GM13977 (cell line): ENCODE measurements at regions of chr15 and their contacts with region 1.

Region 1: DNA sequence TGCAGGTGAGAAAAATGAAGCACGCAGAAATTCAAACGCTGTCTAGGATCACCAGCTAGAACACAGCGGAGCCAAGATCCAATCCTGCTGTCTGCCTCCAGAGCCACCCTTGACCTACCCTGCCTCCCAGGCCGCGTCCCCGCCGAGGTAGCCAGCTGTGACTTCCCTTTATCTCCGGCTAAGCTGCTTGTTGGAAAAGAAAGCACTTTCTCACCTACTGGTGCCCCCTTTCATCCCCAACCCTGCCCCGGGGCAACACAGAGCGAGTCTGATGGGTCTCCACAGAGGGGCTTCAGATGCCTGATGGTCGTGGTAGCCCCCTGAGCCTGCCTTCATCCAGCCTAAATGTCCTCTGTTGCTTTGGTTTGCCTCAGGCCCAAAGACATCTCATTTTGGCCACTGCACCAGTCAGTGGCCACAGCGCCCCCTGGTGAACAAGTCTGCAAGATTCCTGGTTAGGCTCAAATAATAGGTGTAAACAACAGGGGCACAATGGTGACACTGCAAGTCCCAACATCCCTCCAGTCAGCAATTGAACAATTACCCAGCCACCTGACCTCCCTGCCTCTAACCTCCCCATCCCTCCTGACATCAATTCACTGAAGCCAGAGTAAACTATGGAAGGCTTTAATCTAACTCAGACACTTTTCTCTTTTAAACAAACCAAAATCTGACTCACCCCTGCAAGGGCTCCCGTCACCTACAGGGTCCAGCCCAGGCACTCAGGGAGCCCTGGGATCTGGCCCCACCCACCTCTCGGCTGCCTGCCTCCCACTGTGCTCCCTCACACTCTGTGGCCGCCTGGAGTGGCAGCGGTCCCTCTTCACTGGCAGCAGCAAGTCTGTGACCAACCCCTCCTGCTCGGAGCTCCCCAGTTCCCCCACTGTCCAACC is 27.3 kb upstream of the BCL2L10 start:
- DNase-seq: peak; percentile 82
- CTCF ChIP-seq: peak; percentile 89

Region 2: DNA sequence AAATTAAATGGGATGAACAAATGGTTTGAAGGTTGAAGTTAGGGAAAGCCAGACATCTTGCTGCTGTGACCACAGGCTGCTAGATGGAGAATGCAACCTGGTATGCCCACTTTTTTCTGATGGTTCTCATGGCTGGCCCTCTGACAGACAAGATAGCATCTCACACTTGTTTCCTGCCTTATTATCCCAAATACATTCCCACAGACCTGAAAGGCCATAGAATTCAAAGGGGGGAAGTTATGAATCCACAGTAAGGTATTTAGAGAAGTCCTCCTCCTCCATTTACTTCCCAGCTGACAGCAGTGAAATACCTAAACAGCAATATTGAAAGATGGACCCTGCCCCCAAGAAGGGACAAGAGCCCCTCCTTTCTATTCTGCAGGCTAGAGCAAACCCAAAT is 200.6 kb before region 1 on chr15:
- in situ Hi-C with region 1: no loop called
- DNase-seq: no peak
- CTCF ChIP-seq: no peak

Region 3: GRCh38 chr15:51955504-51956101 is 184.2 kb before region 1 on chr15:
- in situ Hi-C with region 1: no loop called
- DNase-seq: no peak
- CTCF ChIP-seq: no peak

Region 4: GRCh38 chr15:51982013-51982769 is 157.7 kb before region 1 on chr15:
- in situ Hi-C with region 1: loop called (anchors 10 kb)
- DNase-seq: peak; percentile 77
- CTCF ChIP-seq: peak; percentile 67